ENCODE measurements at regions of chr15 and their contacts with region 1.

Region 1: GRCh38 chr15:88447206-88447605 is 20.0 kb downstream of the MRPL46 start:
- DNase-seq: no peak
- H3K4me3 ChIP-seq: no peak overlapping the region
- H3K27ac ChIP-seq: no peak overlapping the region
- H3K4me1 ChIP-seq: no peaks in the 10 kb centered on the region
- H3K27me3 ChIP-seq: no peaks in the 10 kb centered on the region
- CTCF ChIP-seq: no peak

Region 2: GRCh38 chr15:88509964-88510363 is 62.8 kb after region 1 on chr15:
- CTCF ChIA-PET with region 1: no interaction called
- dilution Hi-C with region 1: loop called (anchors 5 kb)
- in situ Hi-C with region 1: no loop called
- intact Hi-C with region 1: no loop called
- DNase-seq: no peak
- H3K4me3 ChIP-seq: no peak overlapping the region
- H3K27ac ChIP-seq: no peak overlapping the region
- H3K4me1 ChIP-seq: no peaks in the 10 kb centered on the region
- H3K27me3 ChIP-seq: no peaks in the 10 kb centered on the region
- CTCF ChIP-seq: no peak

Measured in mammary epithelial cell (primary cell).